AG04450 (cell line): ENCODE measurements at regions of chr7 and their contacts with region 1.

Region 1: GRCh38 chr7:39453743-39454355 is 112.4 kb upstream of the YAE1 start:
- DNase-seq: peak; percentile 21
- H3K4me3 ChIP-seq: no peak overlapping the region
- H3K27ac ChIP-seq: no peak overlapping the region
- H3K27me3 ChIP-seq: peaks cover 2% of the 10 kb centered on the region
- CTCF ChIP-seq: peak; percentile 80

Region 2: GRCh38 chr7:39464350-39465054 is 10.7 kb after region 1 on chr7:
- CTCF ChIA-PET with region 1: interaction called, 15 read pairs
- POLR2A ChIA-PET with region 1: no interaction called
- DNase-seq: no peak
- H3K4me3 ChIP-seq: no peak overlapping the region
- H3K27ac ChIP-seq: no peak overlapping the region
- H3K27me3 ChIP-seq: peaks cover 6% of the 10 kb centered on the region
- CTCF ChIP-seq: no peak